ENCODE measurements at regions of chr13 and their contacts with region 1.

Region 1: DNA sequence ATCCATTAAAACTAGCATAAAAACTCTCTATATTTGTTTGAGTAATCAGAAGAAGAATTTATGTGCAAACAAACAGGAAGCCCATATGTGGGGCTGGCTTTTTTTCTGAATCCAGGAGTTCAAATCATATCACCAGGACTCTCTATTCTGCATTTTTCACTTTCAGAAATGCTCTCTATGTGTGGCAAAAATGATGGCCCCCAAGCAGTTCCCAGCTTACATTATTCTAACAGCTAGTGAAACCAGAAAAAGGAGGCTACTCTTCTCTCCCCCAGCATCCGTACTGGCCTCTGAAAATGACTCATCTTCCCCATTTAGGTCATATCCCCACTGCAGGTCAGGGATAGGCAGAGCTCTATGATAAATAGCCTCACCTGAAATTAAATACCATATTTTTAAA is 20.4 kb downstream of the RBM26 start:
- DNase-seq: peak; percentile 53
- ATAC-seq: peak; percentile 72
- H3K4me3 Mint-ChIP-seq: peak overlapping the region; percentile 30
- H3K27ac Mint-ChIP-seq: no peak overlapping the region
- H3K4me1 Mint-ChIP-seq: peaks cover 79% of the 10 kb centered on the region
- H3K27me3 Mint-ChIP-seq: no peaks in the 10 kb centered on the region

Region 2: DNA sequence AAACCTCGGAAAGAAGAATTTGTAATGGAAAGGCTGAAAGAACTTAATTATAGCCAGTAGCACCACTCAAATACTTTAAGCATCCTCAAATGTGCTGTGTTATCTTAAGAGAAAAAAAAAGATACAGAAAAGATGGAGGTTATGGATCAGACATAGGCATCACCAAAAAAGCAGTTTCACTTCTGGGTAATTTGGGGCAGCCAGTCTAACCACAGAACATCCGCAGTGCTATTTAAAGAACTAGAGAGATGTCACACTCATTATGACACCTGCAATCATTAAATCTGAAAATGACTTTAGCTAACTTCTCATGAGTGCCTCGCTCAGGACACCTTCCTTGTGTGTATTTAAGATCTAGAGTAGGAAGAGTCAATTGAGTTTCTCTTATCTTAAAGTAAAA is 191.4 kb before region 1 on chr13:
- CTCF ChIA-PET with region 1: no interaction called
- POLR2A ChIA-PET with region 1: no interaction called
- intact Hi-C with region 1: loop called (anchors 1 kb)
- DNase-seq: peak; percentile 75
- ATAC-seq: peak; percentile 92
- H3K4me3 Mint-ChIP-seq: no peak overlapping the region
- H3K27ac Mint-ChIP-seq: peak overlapping the region; percentile 45
- H3K4me1 Mint-ChIP-seq: peaks cover 39% of the 10 kb centered on the region
- H3K27me3 Mint-ChIP-seq: peaks cover 2% of the 10 kb centered on the region

Region 3: GRCh38 chr13:79349011-79349410 is 36.7 kb before region 1 on chr13:
- CTCF ChIA-PET with region 1: interaction called, 5 read pairs
- POLR2A ChIA-PET with region 1: no interaction called
- intact Hi-C with region 1: loop called in 1 of 2 experiments (anchors 5 kb)
- DNase-seq: no peak
- ATAC-seq: no peak
- H3K4me3 Mint-ChIP-seq: no peak overlapping the region
- H3K27ac Mint-ChIP-seq: no peak overlapping the region
- H3K4me1 Mint-ChIP-seq: peaks cover 16% of the 10 kb centered on the region
- H3K27me3 Mint-ChIP-seq: no peaks in the 10 kb centered on the region

Region 4: GRCh38 chr13:79360095-79360494 is 25.6 kb before region 1 on chr13:
- CTCF ChIA-PET with region 1: interaction called, 3 read pairs
- POLR2A ChIA-PET with region 1: no interaction called
- intact Hi-C with region 1: loop called (anchors 2 kb)
- DNase-seq: no peak
- ATAC-seq: peak; percentile 44
- H3K4me3 Mint-ChIP-seq: no peak overlapping the region
- H3K27ac Mint-ChIP-seq: no peak overlapping the region
- H3K4me1 Mint-ChIP-seq: peaks cover 42% of the 10 kb centered on the region
- H3K27me3 Mint-ChIP-seq: no peaks in the 10 kb centered on the region

Region 5: GRCh38 chr13:79365981-79366380 is 19.7 kb before region 1 on chr13:
- CTCF ChIA-PET with region 1: interaction called, 3 read pairs
- POLR2A ChIA-PET with region 1: no interaction called
- intact Hi-C with region 1: loop called (anchors 2 kb)
- DNase-seq: no peak
- ATAC-seq: no peak
- H3K4me3 Mint-ChIP-seq: no peak overlapping the region
- H3K27ac Mint-ChIP-seq: no peak overlapping the region
- H3K4me1 Mint-ChIP-seq: peaks cover 24% of the 10 kb centered on the region
- H3K27me3 Mint-ChIP-seq: no peaks in the 10 kb centered on the region

Region 6: GRCh38 chr13:79405829-79406596 is 20.3 kb after region 1 on chr13 and contains the start of gene RBM26:
- CTCF ChIA-PET with region 1: interaction called, 15 read pairs
- POLR2A ChIA-PET with region 1: interaction called, 8 read pairs
- intact Hi-C with region 1: loop called in 1 of 2 experiments (anchors 1 kb)
- DNase-seq: peak; percentile 97
- ATAC-seq: peak; percentile 87
- H3K4me3 Mint-ChIP-seq: no peak within 1 kb of the TSS
- H3K27ac Mint-ChIP-seq: peak within 1 kb of the TSS; percentile 98
- H3K4me1 Mint-ChIP-seq: peaks cover 44% of the 10 kb centered on the region
- H3K27me3 Mint-ChIP-seq: no peaks in the 10 kb centered on the region
- total RNA-seq, gene RBM26: 61.3 to 79.6 TPM

Region 7: DNA sequence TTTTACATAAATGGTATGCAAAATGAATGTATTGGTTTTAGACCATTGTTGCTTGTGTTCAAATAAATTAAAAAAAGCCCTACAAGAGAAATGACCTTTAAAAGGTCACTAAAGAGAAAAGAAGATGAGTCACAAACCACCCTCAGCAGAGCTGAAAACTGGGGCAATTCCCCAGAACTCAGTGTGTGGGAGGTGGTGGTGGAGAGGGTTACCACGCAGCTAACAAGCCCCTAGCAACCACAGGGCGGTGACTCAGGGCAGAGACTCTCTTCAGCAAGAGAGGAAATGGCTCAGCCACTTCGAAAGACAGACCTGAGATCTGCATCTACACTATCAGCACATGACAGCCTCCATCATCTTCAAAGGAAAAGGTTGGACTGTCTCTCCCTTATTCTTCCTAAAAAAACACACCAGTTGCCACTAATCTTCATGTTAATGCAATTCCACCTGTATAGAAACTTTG is 65.8 kb after region 1 on chr13:
- CTCF ChIA-PET with region 1: no interaction called
- POLR2A ChIA-PET with region 1: no interaction called
- intact Hi-C with region 1: loop called in 1 of 2 experiments (anchors 2 kb)
- DNase-seq: peak; percentile 97
- ATAC-seq: peak; percentile 97
- H3K4me3 Mint-ChIP-seq: peak overlapping the region; percentile 75
- H3K27ac Mint-ChIP-seq: peak overlapping the region; percentile 99
- H3K4me1 Mint-ChIP-seq: peaks cover 81% of the 10 kb centered on the region
- H3K27me3 Mint-ChIP-seq: no peaks in the 10 kb centered on the region

Region 8: DNA sequence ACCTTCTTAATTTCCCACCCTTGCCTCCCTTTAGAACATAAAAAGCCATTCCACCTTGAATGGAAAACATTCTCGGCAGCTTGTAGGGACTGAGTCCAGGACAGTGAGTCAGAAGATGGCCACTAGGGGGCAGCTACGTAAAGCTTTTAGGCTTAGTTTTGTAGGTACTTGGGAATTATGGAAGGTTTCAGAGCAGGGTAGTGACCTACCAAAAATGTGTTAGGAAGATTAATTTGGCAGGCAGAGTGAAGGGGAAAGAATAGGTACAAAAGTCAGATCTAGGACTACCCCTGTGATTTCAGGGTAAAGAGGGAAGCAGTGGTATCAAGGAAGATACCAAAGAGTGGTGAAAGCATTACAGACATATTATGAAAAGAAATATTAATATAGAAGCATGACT is 293.6 kb after region 1 on chr13:
- CTCF ChIA-PET with region 1: no interaction called
- POLR2A ChIA-PET with region 1: no interaction called
- intact Hi-C with region 1: no loop called
- DNase-seq: peak; percentile 73
- ATAC-seq: peak; percentile 30
- H3K4me3 Mint-ChIP-seq: no peak overlapping the region
- H3K27ac Mint-ChIP-seq: no peak overlapping the region
- H3K4me1 Mint-ChIP-seq: no peaks in the 10 kb centered on the region
- H3K27me3 Mint-ChIP-seq: peaks cover 8% of the 10 kb centered on the region

Region 9: DNA sequence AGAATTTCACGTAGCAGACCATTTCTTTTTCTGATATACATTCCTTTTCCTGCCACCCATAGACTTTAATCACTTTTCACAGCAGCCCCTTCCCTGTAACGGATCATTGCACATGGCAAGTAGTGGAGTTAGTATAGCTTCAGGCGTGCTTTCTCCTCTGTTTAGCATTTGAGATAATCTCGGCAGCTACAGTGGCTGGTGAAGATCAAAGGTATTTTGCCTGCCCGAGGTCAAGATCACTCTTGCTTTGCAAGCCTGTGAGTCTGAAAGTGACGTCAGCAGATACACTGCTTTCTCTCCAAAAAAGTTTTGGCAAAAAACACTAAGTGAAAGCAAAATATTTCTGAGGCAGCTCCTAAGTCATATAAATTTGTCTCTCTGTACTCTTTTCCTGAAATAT is 355.3 kb after region 1 on chr13:
- CTCF ChIA-PET with region 1: no interaction called
- POLR2A ChIA-PET with region 1: no interaction called
- intact Hi-C with region 1: no loop called
- DNase-seq: no peak
- ATAC-seq: no peak
- H3K4me3 Mint-ChIP-seq: no peak overlapping the region
- H3K27ac Mint-ChIP-seq: no peak overlapping the region
- H3K4me1 Mint-ChIP-seq: no peaks in the 10 kb centered on the region
- H3K27me3 Mint-ChIP-seq: no peaks in the 10 kb centered on the region

Measured in activated CD4-positive, alpha-beta T cell treated with anti-CD3 and anti-CD28 coated beads for 36 hours (primary cell).